Mammary epithelial cell (primary cell): ENCODE measurements at regions of chr1 and their contacts with region 1.

Region 1: DNA sequence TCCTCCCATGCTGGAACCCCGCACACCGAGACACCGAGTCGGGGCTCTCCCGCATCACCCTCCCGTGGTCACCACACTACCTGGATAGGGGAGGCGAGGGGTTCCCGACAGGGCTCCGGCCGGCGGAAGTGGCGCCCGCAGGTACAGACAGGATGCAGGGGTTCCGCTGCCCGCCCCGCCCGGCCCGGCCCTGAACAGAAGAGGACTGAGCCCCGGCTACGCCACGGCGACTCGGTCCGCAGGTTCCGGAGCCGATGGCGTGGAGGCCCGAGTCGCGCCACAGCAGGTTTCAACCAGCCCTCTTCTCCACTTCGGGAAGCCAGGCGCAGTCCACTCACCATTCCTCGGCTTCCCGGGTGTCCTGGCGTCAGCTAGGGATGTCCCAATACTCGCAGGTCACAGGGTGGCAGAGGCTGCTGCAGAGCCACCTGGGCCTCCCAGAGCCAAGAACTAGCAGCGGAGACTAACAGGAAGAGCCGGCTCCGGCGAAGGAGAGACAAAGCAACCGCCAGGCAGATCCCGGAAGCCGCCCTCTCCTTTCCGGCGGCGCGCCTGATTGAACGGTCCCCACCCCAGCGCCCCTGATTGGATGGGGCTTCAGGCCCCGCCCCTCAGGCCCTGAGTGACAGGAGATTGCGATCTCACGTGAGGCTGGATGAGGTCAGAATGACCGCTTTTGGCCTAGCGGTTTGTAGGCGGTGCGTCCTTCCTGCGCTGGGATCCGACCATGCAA is at the start of gene ZNF669:
- DNase-seq: peak; percentile 92
- H3K4me3 ChIP-seq: peak within 1 kb of the TSS; percentile 64 to 95 (median 79)
- H3K27ac ChIP-seq: peak within 1 kb of the TSS; percentile 80
- H3K4me1 ChIP-seq: no peaks in the 10 kb centered on the region
- H3K27me3 ChIP-seq: no peaks in the 10 kb centered on the region
- CTCF ChIP-seq: no peak
- total RNA-seq, gene ZNF669: 7.4 to 9.0 TPM

Region 2: DNA sequence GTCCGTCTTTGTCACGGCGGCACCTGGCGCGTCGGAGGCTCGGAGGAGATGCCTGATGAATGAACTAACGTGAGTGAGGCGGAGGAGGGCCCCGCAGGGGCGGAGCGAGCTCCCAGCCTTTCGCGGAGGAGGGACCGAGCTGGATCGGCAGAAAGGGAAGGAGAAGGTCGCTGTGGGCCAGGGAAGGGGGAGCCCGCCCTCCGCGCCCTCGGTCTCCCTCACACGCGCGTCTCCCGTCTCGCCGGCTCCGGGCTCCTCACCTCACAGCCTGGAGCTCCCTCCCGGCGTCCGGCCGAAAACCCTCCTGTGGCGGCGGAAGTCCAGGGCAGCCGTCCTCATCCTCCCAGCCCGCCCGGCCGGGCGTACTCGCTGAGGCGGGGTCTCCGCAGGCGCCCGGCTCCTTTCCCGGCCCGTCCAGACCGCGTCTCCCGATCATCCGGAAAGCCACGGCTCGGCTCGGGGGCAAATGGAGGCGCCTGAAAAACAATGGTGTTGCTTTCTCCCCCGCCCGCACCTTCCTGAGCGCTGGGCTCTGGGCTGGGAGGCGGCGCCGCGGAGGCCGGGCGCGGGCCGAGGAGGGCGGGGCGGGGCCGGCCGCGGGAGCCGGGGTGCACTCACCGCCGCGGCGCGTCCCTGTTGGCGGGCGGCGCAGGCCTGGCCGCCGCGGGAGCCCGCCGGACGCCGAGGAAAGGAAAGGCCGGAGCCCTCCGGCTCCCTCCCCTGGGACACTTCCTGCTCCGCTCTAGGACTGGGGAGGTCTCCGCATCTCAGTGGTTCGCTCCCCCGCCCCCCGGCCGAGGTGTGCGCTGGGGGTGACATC is 227.4 kb after region 1 on chr1 and contains the start of gene ZNF496:
- CTCF ChIA-PET with region 1: no interaction called
- dilution Hi-C with region 1: no loop called
- in situ Hi-C with region 1: no loop called
- intact Hi-C with region 1: loop called (anchors 1 kb)
- DNase-seq: peak; percentile 78
- H3K4me3 ChIP-seq: peak within 1 kb of the TSS; percentile 89 to 93 (median 91)
- H3K27ac ChIP-seq: peak within 1 kb of the TSS; percentile 59
- H3K4me1 ChIP-seq: peaks cover 19% of the 10 kb centered on the region
- H3K27me3 ChIP-seq: no peaks in the 10 kb centered on the region
- CTCF ChIP-seq: no peak
- total RNA-seq, gene ZNF496: 18.3 to 23.8 TPM